ENCODE measurements at regions of chr2 and their contacts with region 1.

Region 1: DNA sequence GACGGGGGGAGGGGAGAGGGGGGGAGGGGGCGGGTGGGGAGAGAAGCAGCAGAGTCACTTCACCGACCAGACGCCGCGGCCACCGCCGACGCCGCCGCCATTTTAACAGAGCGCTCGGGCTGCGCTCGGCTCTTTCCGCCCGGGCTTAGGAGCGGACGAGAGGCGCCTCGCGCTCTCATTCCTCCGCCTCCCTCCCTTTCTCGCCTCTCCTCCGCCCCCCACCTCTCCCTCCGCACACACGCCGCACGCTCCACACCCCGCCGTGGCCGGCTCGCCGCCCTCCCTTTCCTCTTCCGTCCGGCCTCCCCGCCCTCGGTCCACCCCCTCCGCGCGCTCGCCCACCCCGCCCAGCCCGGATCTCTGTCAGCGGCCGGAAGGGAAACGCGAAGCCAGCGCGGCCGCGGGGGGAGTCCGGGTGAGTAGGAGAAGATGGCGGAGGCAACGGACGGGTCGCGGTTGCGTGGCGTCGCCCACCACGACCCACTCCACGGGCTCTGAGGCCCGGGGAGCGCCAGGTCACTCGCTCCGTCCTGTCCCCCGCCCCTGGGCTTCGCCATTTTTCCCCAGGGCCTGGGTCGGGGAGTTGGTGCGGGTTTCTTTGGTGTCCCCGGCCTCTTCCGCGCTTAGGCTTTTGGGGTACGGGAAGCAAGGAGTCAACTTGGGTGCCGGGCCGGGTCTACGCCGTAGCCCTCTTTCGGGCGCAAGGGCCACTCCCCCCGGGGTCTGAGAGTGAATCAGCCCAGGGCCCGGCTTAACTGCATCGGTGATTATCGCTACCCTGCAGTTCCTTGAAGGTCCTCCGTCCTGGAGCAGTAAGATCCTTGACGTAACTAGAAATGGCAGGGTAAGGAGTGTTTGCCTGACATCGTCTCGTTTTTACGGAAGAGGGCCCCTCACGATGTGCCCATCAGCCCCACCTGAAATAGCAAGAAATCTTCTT is at the start of gene USP34:
- DNase-seq: peak; percentile 88 to 95 (median 95)
- H3K4me3 ChIP-seq: peak within 1 kb of the TSS; percentile 90 to 98 (median 91)
- H3K4me3 Mint-ChIP-seq: peak within 1 kb of the TSS; percentile 94 to 99
- H3K27ac ChIP-seq: peak within 1 kb of the TSS; percentile 96 to 99
- H3K27ac Mint-ChIP-seq: peak within 1 kb of the TSS; percentile 94 to 99 (median 98)
- H3K4me1 ChIP-seq: peaks cover 21 to 32% of the 10 kb centered on the region in 2 donors
- H3K4me1 Mint-ChIP-seq: peaks cover 24% of the 10 kb centered on the region
- H3K27me3 ChIP-seq: no peaks in the 10 kb centered on the region
- H3K27me3 Mint-ChIP-seq: peaks cover 0 to 2% (median 0%) of the 10 kb centered on the region in 3 donors
- CTCF ChIP-seq: no peak
- polyA plus RNA-seq, gene USP34: 2.8 to 47.2 (median 5.9) TPM

Region 2: DNA sequence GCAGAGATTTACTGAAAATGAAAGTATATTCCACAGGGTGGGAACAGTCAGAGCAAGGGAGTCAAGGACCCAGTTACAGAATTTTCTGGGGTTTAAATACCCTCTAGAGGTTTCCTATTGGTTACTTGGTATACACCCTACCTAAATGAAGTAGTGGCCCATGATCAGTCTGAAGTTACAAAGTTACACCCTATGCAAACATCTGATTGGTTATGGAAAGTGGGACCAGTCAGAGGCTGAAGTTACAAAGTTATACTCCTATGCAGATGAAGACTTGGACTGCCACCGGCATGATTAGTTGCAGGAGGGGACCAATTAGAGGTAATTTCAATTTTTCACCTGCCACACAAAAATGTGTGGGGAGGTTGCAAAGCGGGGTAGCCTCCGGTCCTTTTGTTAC is 56.6 kb before region 1 on chr2:
- intact Hi-C with region 1: no loop called
- DNase-seq: no peak
- H3K4me3 ChIP-seq: no peak overlapping the region
- H3K4me3 Mint-ChIP-seq: no peak overlapping the region
- H3K27ac ChIP-seq: no peak overlapping the region
- H3K27ac Mint-ChIP-seq: peak overlapping the region in 1 of 7 donors; percentile 26
- H3K4me1 ChIP-seq: peaks cover 5 to 7% of the 10 kb centered on the region in 2 donors
- H3K4me1 Mint-ChIP-seq: peaks cover 7% of the 10 kb centered on the region
- H3K27me3 ChIP-seq: no peaks in the 10 kb centered on the region
- H3K27me3 Mint-ChIP-seq: no peaks in the 10 kb centered on the region
- CTCF ChIP-seq: no peak

Region 3: DNA sequence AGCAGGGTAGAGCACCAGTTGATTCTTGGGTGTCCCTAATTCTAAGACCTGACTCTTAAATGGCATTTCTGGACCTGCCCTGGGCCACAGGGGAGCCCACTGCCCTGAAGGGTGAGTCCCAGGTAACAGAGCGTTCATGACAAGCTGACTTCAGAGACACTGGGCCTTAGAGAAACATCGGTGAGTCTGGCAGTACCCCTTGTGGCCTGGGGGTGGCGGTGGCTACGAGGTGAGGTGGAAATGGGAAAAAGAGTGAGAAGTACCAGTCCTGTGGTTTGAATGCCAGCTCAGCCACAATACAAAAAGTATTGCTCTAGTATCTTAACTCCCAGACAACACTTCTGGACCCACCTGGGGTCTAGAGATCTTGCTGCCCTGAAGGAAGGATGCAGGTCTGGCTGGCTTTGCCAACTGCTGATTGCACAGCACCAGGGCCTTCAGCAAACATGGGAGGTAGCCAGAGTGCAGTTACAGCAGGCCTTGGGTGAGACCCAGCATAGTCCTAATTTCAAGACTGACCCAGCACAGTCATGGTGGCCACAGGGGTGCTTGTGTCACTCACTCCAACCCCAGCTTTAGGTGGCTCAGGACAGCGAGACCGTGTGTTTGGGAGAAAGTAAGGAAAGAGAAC is 44.9 kb before region 1 on chr2:
- intact Hi-C with region 1: loop called (anchors 2 to 5 kb)
- DNase-seq: peak; percentile 57 to 71 (median 60)
- H3K4me3 ChIP-seq: no peak overlapping the region
- H3K4me3 Mint-ChIP-seq: no peak overlapping the region
- H3K27ac ChIP-seq: peak overlapping the region; percentile 1 to 68
- H3K27ac Mint-ChIP-seq: peak overlapping the region in 5 of 7 donors; percentile 38 to 88 (median 86)
- H3K4me1 ChIP-seq: peaks cover 23 to 41% of the 10 kb centered on the region in 2 donors
- H3K4me1 Mint-ChIP-seq: peaks cover 59% of the 10 kb centered on the region
- H3K27me3 ChIP-seq: no peaks in the 10 kb centered on the region
- H3K27me3 Mint-ChIP-seq: peaks cover 0 to 1% (median 1%) of the 10 kb centered on the region in 3 donors
- CTCF ChIP-seq: peak; percentile 79

Region 4: GRCh38 chr2:61658841-61659780 is 187.9 kb after region 1 on chr2:
- intact Hi-C with region 1: no loop called
- DNase-seq: peak in 2 of 3 donors; percentile 4 to 7
- H3K4me3 ChIP-seq: no peak overlapping the region
- H3K4me3 Mint-ChIP-seq: peak overlapping the region in 1 of 2 donors; percentile 18
- H3K27ac ChIP-seq: no peak overlapping the region
- H3K27ac Mint-ChIP-seq: no peak overlapping the region
- H3K4me1 ChIP-seq: no peaks in the 10 kb centered on the region
- H3K4me1 Mint-ChIP-seq: peaks cover 2% of the 10 kb centered on the region
- H3K27me3 ChIP-seq: no peaks in the 10 kb centered on the region
- H3K27me3 Mint-ChIP-seq: peaks cover 0 to 2% (median 0%) of the 10 kb centered on the region in 3 donors
- CTCF ChIP-seq: peak; percentile 51

Measured in CD14-positive monocyte (primary cell).